ENCODE measurements at regions of chr12 and their contacts with region 1.

Region 1: GRCh38 chr12:108664338-108665258 is 30.9 kb upstream of the SELPLG start:
- DNase-seq: peak; percentile 98
- ATAC-seq: peak; percentile 86
- H3K4me3 ChIP-seq: no peak overlapping the region
- H3K27ac ChIP-seq: peak overlapping the region; percentile 13; the same call in 1 of the 2 replicates
- H3K4me1 ChIP-seq: peaks cover 22% of the 10 kb centered on the region
- H3K27me3 ChIP-seq: no peaks in the 10 kb centered on the region
- CTCF ChIP-seq: peak; percentile 96

Region 2: DNA sequence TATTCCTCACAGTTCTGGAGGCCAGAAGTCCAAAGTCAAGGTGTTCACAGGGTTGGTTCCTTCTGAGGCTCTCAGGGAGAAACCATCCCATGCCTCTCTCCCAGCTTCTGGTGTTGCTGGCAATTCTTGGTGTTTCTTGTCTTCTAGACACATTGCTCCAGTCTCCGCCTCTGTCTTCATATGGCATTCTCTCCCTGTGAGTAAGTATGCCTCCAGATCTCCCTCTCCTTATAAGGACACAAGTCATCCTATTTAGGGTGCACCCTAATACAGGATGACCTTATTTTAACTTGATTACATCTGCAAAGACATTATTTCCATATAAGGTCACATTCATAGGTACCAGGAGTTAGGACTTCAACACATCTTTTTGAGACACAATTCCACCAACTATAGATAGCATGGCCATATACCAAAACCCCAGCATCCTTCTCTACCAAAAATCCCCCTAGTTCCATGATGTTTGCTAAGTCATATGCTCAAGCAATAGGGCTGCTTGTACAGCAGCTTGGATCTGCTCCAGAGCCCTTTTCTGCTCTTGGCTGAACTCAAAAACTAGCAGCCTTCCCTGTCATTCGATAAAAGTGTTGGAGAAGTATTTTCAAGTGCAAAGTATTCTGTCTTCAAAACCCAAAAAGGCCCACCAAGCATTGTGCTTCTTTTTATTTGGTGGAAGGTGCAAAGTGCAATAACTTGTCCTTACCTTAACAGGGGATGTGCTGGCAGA is 246.3 kb before region 1 on chr12:
- CTCF ChIA-PET with region 1: no interaction called
- POLR2A ChIA-PET with region 1: no interaction called
- intact Hi-C with region 1: no loop called
- DNase-seq: no peak
- ATAC-seq: no peak
- H3K4me3 ChIP-seq: no peak overlapping the region
- H3K27ac ChIP-seq: no peak overlapping the region
- H3K4me1 ChIP-seq: no peaks in the 10 kb centered on the region
- H3K27me3 ChIP-seq: peaks cover 16% of the 10 kb centered on the region
- CTCF ChIP-seq: no peak

Region 3: DNA sequence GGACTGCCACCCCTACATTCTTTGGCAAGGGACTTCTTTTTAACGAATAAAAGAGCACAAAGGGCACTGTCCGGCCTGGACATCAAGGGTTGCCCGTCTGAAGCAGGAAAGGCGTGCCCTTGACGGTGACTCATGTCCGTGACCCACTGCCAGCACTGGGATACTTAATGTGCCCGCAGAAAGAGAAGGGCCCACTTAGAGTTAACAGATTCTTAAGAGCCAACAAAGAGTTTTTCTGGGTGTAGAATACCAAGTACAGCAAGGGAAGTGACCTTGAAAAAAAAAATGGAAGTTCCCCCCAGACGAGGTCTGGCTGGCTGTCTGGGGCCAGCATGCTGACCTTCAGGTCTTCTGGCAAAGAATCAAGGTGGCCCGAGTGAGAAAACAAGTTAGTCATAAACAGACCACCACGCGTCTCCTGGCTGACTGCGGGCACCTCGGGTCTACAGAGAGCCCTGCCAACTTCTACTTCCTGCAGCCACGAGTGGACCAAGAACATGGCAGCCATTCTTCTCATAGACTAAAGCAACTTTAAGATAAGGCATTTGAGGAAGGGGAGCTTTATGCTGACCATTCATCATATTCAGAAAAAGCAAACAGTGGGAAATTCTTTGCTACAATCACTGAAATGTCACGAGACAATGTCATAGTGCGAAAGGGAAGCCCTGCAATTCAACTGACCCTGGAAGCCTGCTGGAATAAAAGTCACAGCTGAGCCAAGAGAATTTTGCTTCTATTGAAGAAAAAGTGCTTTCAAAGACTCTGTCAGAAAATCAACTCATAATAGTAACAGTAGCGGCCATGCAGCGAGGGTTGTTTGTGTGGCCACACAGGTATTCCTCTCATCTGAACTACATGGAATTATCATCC is 20.4 kb before region 1 on chr12:
- CTCF ChIA-PET with region 1: interaction called, 15 read pairs
- POLR2A ChIA-PET with region 1: no interaction called
- intact Hi-C with region 1: no loop called
- DNase-seq: peak; percentile 59
- ATAC-seq: peak; percentile 95
- H3K4me3 ChIP-seq: no peak overlapping the region
- H3K27ac ChIP-seq: no peak overlapping the region
- H3K4me1 ChIP-seq: peaks cover 18% of the 10 kb centered on the region
- H3K27me3 ChIP-seq: no peaks in the 10 kb centered on the region
- CTCF ChIP-seq: no peak

Region 4: GRCh38 chr12:108731105-108731865 is 66.7 kb after region 1 on chr12 and contains the start of gene CORO1C:
- CTCF ChIA-PET with region 1: no interaction called
- POLR2A ChIA-PET with region 1: interaction called, 3 read pairs
- intact Hi-C with region 1: loop called (anchors 1 kb)
- DNase-seq: peak; percentile 99
- ATAC-seq: peak; percentile 53
- H3K4me3 ChIP-seq: peak within 1 kb of the TSS; percentile 68
- H3K27ac ChIP-seq: peak within 1 kb of the TSS; percentile 87
- H3K4me1 ChIP-seq: peaks cover 57% of the 10 kb centered on the region
- H3K27me3 ChIP-seq: no peaks in the 10 kb centered on the region
- CTCF ChIP-seq: peak; percentile 83
- total RNA-seq, gene CORO1C: 159 and 179 TPM in 2 replicates

Region 5: DNA sequence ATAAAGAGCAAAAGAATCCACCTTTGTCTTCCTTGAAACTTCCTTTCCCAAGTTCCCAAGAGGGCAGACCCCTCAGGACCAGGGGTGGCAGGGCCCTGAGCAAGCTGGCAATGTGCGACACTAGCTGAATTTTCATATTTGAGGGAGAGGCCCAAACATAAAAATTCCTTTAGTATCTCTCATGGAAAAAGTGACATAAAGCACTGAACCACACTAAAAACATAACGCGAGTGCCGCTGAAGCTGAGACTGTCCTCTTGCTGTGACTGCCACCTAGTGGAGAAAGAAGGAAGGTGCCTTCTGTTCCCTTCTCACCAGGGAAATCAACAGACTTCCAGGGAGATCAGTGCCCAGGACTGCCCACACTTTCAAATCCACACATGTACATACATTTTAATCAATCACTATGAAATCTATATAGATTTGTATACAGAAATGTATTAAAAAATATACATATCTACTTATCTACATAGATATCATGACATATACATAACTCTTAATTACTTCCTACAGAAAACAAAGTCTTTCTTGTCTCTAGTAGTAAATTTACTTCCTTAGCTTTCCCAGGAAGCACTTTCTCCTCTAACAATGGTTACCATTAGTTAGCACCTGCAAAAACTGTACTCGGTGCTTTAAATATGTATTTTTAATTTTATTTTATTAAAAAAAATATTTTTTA is 139.0 kb after region 1 on chr12:
- CTCF ChIA-PET with region 1: interaction called, 27 read pairs
- POLR2A ChIA-PET with region 1: no interaction called
- intact Hi-C with region 1: loop called (anchors 1 kb)
- DNase-seq: peak; percentile 96
- ATAC-seq: peak; percentile 97
- H3K4me3 ChIP-seq: no peak overlapping the region
- H3K27ac ChIP-seq: peak overlapping the region; percentile 44
- H3K4me1 ChIP-seq: peaks cover 6% of the 10 kb centered on the region
- H3K27me3 ChIP-seq: no peaks in the 10 kb centered on the region
- CTCF ChIP-seq: peak; percentile 97